ENCODE measurements at regions of chr7 and their contacts with region 1.

Region 1: GRCh38 chr7:149838224-149838947 is at the start of gene ZNF862:
- DNase-seq: peak; percentile 95
- H3K4me3 Mint-ChIP-seq: peak within 1 kb of the TSS; percentile 89
- H3K27ac Mint-ChIP-seq: peak within 1 kb of the TSS; percentile 75
- H3K4me1 Mint-ChIP-seq: peaks cover 25% of the 10 kb centered on the region
- H3K27me3 Mint-ChIP-seq: peaks cover 9% of the 10 kb centered on the region
- total RNA-seq, gene ZNF862: 14.2 and 19.3 TPM in 2 replicates

Region 2: GRCh38 chr7:149598721-149599306 is 239.6 kb before region 1 on chr7:
- intact Hi-C with region 1: loop called (anchors 1 kb)
- DNase-seq: peak; percentile 9
- H3K4me3 Mint-ChIP-seq: no peak overlapping the region
- H3K27ac Mint-ChIP-seq: no peak overlapping the region
- H3K4me1 Mint-ChIP-seq: peaks cover 32% of the 10 kb centered on the region
- H3K27me3 Mint-ChIP-seq: peaks cover 4% of the 10 kb centered on the region

Region 3: GRCh38 chr7:149714050-149714909 is 124.1 kb before region 1 on chr7:
- intact Hi-C with region 1: loop called (anchors 1 kb)
- DNase-seq: peak; percentile 79
- H3K4me3 Mint-ChIP-seq: peak overlapping the region; percentile 74
- H3K27ac Mint-ChIP-seq: peak overlapping the region; percentile 68
- H3K4me1 Mint-ChIP-seq: peaks cover 13% of the 10 kb centered on the region
- H3K27me3 Mint-ChIP-seq: peaks cover 4% of the 10 kb centered on the region

Region 4: GRCh38 chr7:149855361-149856305 is 17.2 kb after region 1 on chr7:
- intact Hi-C with region 1: loop called (anchors 1 kb)
- DNase-seq: no peak
- H3K4me3 Mint-ChIP-seq: peak overlapping the region; percentile 60
- H3K27ac Mint-ChIP-seq: peak overlapping the region; percentile 44
- H3K4me1 Mint-ChIP-seq: peaks cover 30% of the 10 kb centered on the region
- H3K27me3 Mint-ChIP-seq: no peaks in the 10 kb centered on the region

Region 5: GRCh38 chr7:149866779-149867447 is 28.5 kb after region 1 on chr7:
- intact Hi-C with region 1: no loop called
- DNase-seq: no peak
- H3K4me3 Mint-ChIP-seq: peak overlapping the region; percentile 10
- H3K27ac Mint-ChIP-seq: peak overlapping the region; percentile 76
- H3K4me1 Mint-ChIP-seq: peaks cover 71% of the 10 kb centered on the region
- H3K27me3 Mint-ChIP-seq: no peaks in the 10 kb centered on the region

Region 6: DNA sequence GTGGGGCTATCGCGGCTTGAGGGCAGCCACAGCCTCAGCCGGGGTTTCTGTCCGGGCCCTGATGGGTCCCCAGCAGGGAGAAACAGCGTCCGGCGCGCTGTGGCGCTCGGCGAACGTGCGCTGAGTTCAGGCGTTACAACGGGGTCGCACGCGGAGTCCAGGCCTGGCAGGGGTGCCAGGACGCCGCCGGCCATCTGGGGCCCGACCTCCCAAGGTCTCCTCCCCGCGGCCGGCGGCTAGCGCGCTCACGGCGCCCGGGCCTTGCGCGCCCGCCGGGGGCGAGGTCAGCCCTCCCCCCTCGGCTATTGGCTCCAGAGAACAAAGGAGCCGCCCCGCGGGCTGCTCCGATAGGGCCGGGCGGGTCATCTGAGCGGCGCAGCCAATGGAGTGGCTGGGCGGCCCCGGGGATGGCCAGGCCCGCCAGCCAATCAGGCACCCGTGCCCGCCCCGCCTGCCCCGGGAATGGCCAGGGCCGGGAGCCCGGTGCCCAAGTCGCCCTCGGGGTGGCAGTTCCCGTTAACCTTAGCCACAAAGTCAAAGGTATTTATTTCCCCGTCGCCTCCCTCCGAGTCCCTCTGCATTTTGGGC is 540.6 kb after region 1 on chr7 and contains the start of gene ZNF775:
- intact Hi-C with region 1: loop called (anchors 1 kb)
- DNase-seq: peak; percentile 93
- H3K4me3 Mint-ChIP-seq: peak within 1 kb of the TSS; percentile 90
- H3K27ac Mint-ChIP-seq: peak within 1 kb of the TSS; percentile 83
- H3K4me1 Mint-ChIP-seq: peaks cover 59% of the 10 kb centered on the region
- H3K27me3 Mint-ChIP-seq: no peaks in the 10 kb centered on the region
- total RNA-seq, gene ZNF775: 3.9 and 4.5 TPM in 2 replicates